ENCODE measurements at regions of chr3 and their contacts with region 1.

Region 1: GRCh38 chr3:160707187-160707794 is 30.3 kb downstream of the ARL14 start:
- DNase-seq: peak in 2 of 6 donors; percentile 19 to 30
- ATAC-seq: peak; percentile 80 to 94 (median 92)
- H3K4me3 ChIP-seq: no peak overlapping the region
- H3K27ac ChIP-seq: no peak overlapping the region
- H3K4me1 ChIP-seq: peaks cover 0 to 7% (median 0%) of the 10 kb centered on the region in 3 donors
- H3K27me3 ChIP-seq: no peaks in the 10 kb centered on the region
- CTCF ChIP-seq: peak in 3 of 4 donors; percentile 25 to 53 (median 26)

Region 2: GRCh38 chr3:160931474-160931873 is 224.2 kb after region 1 on chr3:
- intact Hi-C with region 1: loop called in 1 of 3 experiments (anchors 10 kb)
- DNase-seq: no peak
- ATAC-seq: no peak
- H3K4me3 ChIP-seq: no peak overlapping the region
- H3K27ac ChIP-seq: no peak overlapping the region
- H3K4me1 ChIP-seq: no peaks in the 10 kb centered on the region
- H3K27me3 ChIP-seq: no peaks in the 10 kb centered on the region
- CTCF ChIP-seq: no peak

Region 3: GRCh38 chr3:160941885-160942494 is 234.7 kb after region 1 on chr3:
- intact Hi-C with region 1: loop called in 2 of 3 experiments (anchors 10 kb)
- DNase-seq: peak in 4 of 6 donors; percentile 35 to 79 (median 54)
- ATAC-seq: peak; percentile 86 to 98 (median 96)
- H3K4me3 ChIP-seq: no peak overlapping the region
- H3K27ac ChIP-seq: no peak overlapping the region
- H3K4me1 ChIP-seq: peaks cover 0 to 4% (median 0%) of the 10 kb centered on the region in 3 donors
- H3K27me3 ChIP-seq: no peaks in the 10 kb centered on the region
- CTCF ChIP-seq: peak; percentile 58 to 79 (median 70)